HepG2 (cell line): ENCODE measurements at regions of chr11 and their contacts with region 1.

Region 1: GRCh38 chr11:57335343-57336110 is at the start of gene SSRP1:
- DNase-seq: peak; percentile 79
- ATAC-seq: peak; percentile 98
- H3K4me3 ChIP-seq: peak within 1 kb of the TSS; percentile 61 to 85 (median 80)
- H3K27ac ChIP-seq: peak within 1 kb of the TSS; percentile 65
- H3K4me1 ChIP-seq: peaks cover 37% of the 10 kb centered on the region
- H3K27me3 ChIP-seq: 0 out of 5 replicates have a peak, but pooled peaks cover 0 to 6% of the 10 kb centered on the region in 2 experiments
- CTCF ChIP-seq: peak; percentile 69
- EP300 ChIP-seq: 0 out of 4 replicates have a peak, but pooled peaks of 1 of the 2 experiments have one; percentile 7
- POLR2A ChIP-seq: peak; percentile 47 to 58
- RAD21 ChIP-seq: no peak
- total RNA-seq, gene SSRP1: 129 and 175 TPM in 2 replicates

Region 2: GRCh38 chr11:57294605-57295131 is 40.9 kb before region 1 on chr11:
- CTCF ChIA-PET with region 1: no interaction called
- POLR2A ChIA-PET with region 1: interaction called, 3 read pairs
- in situ Hi-C with region 1: no loop called
- intact Hi-C with region 1: loop called (anchors 5 kb)
- DNase-seq: no peak
- ATAC-seq: no peak; the same call in 2 of the 3 replicates
- H3K4me3 ChIP-seq: no peak overlapping the region
- H3K27ac ChIP-seq: no peak overlapping the region
- H3K4me1 ChIP-seq: peaks cover 35% of the 10 kb centered on the region
- H3K27me3 ChIP-seq: no peaks in the 10 kb centered on the region
- CTCF ChIP-seq: no peak
- EP300 ChIP-seq: no peak
- POLR2A ChIP-seq: no peak
- RAD21 ChIP-seq: no peak

Region 3: DNA sequence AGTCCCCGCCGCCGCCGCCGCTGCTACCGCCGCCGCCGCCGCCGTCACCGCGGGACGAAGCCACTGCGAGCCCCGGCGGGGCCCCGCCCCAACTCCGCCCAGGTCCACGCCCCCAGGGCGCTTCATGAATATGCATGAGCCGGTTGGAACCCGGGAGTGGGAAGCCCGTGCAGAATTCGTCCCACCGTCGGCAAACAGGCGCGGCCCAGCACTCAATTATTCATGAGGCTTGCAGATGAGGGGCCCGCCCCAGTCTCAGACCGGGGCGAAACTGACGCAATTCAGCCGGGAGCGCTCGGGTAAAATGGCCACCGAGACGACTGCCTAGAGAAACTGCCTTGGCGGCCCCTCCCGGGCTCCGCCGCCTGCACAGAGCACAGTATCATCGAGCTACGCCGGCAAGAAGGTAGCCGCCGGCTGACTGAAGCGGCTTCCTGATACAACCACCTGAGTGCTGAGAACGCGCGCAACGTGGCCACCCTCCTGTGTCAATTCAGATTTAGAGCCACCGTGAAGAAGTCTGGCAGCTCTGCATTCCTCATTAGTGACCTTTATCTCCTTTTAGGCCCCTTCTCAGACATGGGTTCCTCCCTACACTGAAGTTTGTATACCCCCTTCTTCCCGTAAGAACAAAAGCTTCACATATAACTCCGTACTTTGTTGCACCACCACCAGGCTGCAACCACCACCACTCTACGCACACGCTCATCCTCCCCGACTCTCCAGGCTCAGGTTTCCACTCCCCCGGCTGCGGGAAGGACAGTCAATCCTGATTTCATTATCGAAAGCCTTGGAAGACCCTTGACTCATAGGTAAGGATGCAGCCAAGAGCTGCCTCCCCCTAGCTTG is 10.4 kb before region 1 on chr11 and contains the start of gene TNKS1BP1:
- CTCF ChIA-PET with region 1: no interaction called
- POLR2A ChIA-PET with region 1: interaction called, 65 read pairs
- in situ Hi-C with region 1: no loop called
- intact Hi-C with region 1: loop called (anchors 1 kb)
- DNase-seq: peak; percentile 91
- ATAC-seq: peak; percentile 84
- H3K4me3 ChIP-seq: peak within 1 kb of the TSS; percentile 71 to 88 (median 76)
- H3K27ac ChIP-seq: peak within 1 kb of the TSS; percentile 90
- H3K4me1 ChIP-seq: peaks cover 51% of the 10 kb centered on the region
- H3K27me3 ChIP-seq: no peaks in the 10 kb centered on the region; a peak in 1 of 5 replicates
- CTCF ChIP-seq: no peak
- EP300 ChIP-seq: no peak
- POLR2A ChIP-seq: peak; percentile 61 to 65
- RAD21 ChIP-seq: no peak
- total RNA-seq, gene TNKS1BP1: 12.2 and 13.7 TPM in 2 replicates